Common myeloid progenitor, CD34-positive (primary cell): ENCODE measurements at regions of chr1 and their contacts with region 1.

Region 1: DNA sequence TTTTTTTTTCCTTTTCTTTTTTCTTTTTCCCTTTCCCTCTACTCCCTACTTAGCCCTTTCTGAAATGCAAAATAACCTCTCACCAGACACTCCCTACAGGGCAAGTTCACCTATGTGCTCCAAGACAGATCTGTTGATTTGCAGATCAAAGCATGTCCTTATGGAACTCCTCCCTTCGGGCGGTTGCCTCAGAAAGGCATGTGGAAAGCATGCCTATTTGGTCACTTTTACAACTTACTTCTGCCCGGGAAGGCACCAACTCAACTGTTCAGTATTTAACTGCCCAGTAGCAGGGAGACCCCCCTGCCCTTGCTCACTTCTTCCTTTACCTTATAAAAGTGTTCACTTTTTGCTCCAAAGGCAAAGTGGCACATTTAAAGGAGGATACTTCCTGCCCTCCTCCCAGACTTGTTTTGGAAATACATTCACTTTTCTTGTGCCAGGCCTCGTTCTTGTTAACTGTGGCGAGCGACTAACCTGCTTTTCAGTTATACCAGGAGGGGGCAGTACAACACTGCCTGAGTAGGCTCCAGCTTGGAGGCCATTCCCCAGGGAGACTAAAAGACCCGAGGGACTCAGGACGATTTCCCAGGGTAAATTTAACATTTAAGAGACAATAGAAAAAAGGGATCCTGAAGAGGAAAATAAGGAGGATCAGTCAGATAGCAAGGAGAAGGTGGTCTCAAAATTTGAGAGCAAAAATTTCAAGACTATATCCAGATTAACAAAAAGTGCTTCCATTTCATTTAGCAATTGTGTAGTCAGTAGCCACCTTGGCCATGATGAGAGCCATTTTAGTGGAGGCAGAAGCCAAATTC is 12.3 kb upstream of the SLAMF7 start:
- DNase-seq: peak; percentile 74 to 83 (median 81)
- H3K4me3 ChIP-seq: peak overlapping the region in 1 of 7 experiments; percentile 4
- H3K27ac ChIP-seq: no peak overlapping the region
- H3K4me1 ChIP-seq: peaks cover 7 to 41% (median 16%) of the 10 kb centered on the region in 4 experiments
- H3K27me3 ChIP-seq: no peaks in the 10 kb centered on the region

Region 2: DNA sequence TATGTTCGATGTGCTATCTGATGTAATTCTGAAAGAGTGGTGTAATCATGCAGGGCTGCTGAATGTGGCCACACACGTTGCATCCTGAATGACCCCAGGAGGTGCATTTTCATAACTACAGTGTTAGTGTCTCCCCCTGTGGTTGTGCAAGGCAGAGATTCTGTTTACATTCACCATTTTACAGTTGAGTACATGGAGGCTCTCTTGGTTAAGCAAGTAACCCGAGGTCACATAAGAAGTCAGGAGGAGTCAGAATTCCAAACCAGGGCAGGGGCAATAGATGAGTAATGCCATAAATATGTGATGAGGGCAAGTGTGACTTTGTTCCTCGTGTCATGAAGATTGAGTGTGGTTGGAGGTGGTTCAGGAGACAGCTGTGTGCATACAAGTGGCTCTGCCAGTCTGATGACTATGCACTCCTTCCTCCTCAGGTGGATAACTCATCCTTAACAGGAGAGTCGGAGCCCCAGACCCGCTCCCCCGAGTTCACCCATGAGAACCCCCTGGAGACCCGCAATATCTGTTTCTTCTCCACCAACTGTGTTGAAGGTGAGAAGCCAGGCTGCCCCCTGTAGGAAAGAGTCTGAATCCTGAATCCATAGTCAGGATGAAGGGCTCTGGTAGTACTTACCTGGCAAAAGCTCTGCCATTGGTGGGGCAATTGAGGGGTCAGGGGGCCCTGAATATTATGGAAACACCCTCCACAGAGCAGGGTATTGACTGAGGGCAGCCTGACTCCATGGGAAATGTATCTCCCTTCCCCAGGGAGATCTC is 601.8 kb before region 1 on chr1:
- CTCF ChIA-PET with region 1: no interaction called
- POLR2A ChIA-PET with region 1: no interaction called
- DNase-seq: no peak
- H3K4me3 ChIP-seq: no peak overlapping the region
- H3K27ac ChIP-seq: no peak overlapping the region
- H3K4me1 ChIP-seq: no peaks in the 10 kb centered on the region
- H3K27me3 ChIP-seq: no peaks in the 10 kb centered on the region

Region 3: DNA sequence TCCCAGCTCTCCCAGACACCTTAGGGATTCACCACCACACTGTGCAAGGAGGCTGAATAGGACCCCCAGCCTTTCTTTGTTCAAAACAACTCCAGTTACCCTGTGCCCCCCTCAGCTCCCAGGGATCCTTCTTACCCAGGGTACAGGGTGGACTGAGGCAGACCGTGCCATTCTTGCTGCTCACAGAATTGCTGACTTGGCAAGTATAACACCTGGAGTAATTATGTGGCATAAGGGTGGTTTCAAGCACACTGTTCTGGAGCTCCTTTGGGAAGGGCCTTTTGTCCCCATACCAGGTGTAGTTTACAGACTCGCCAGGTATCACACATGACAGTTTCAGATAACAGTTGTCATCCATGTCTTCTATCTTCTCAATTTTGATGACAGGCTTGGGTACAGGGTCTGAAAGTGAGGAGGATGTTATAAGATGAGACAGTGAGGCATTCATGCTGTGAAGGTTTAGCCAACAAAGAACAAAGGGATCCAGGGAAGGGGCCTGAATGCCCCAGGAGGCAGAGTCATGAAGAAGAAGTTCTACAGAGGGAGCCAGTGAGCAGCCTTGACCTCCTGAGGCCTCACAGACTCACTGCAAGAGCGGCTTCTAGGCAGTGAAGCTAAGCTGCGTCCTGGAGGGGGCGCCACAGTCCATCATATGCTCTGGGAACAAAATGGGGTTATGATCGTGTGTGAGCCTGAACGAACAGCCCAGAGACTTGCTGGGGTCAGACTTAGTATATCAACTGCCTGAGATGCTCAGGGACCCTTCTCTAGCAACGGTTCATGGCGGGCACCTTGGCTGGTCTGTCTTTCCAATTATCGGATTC is 45.4 kb before region 1 on chr1:
- CTCF ChIA-PET with region 1: interaction called, 34 read pairs
- POLR2A ChIA-PET with region 1: no interaction called
- DNase-seq: peak; percentile 88 to 94 (median 89)
- H3K4me3 ChIP-seq: no peak overlapping the region
- H3K27ac ChIP-seq: no peak overlapping the region
- H3K4me1 ChIP-seq: peaks cover 0 to 24% (median 13%) of the 10 kb centered on the region in 4 experiments
- H3K27me3 ChIP-seq: no peaks in the 10 kb centered on the region

Region 4: GRCh38 chr1:160704250-160704649 is 22.5 kb before region 1 on chr1:
- CTCF ChIA-PET with region 1: interaction called, 19 read pairs
- POLR2A ChIA-PET with region 1: no interaction called
- DNase-seq: peak; percentile 58 to 90 (median 81)
- H3K4me3 ChIP-seq: peak overlapping the region in 2 of 7 experiments; percentile 16 to 55
- H3K27ac ChIP-seq: no peak overlapping the region
- H3K4me1 ChIP-seq: peaks cover 43 to 73% (median 49%) of the 10 kb centered on the region in 4 experiments
- H3K27me3 ChIP-seq: no peaks in the 10 kb centered on the region

Region 5: DNA sequence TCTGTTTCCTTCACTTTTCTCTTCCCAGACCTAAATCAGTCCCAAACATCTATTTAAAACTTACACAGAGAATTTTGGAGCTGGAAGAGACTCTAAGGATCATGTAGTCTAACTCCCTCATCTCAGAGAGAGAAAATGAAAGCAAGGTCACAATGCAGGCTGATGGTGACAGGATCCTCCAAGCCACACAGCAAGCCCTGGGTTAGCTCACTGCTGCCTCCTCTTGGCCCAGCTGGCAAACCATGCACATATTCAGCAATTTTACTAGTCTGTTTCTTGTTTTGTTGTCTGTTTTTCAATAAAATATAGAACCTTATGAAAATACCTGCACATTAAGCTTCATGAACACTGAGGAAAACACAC is 41.6 kb after region 1 on chr1:
- CTCF ChIA-PET with region 1: interaction called, 12 read pairs
- POLR2A ChIA-PET with region 1: no interaction called
- DNase-seq: peak; percentile 73 to 88 (median 85)
- H3K4me3 ChIP-seq: peak overlapping the region in 1 of 7 experiments; percentile 27
- H3K27ac ChIP-seq: no peak overlapping the region
- H3K4me1 ChIP-seq: peaks cover 0 to 9% (median 3%) of the 10 kb centered on the region in 4 experiments
- H3K27me3 ChIP-seq: no peaks in the 10 kb centered on the region

Region 6: GRCh38 chr1:160830321-160831153 is 103.8 kb after region 1 on chr1:
- CTCF ChIA-PET with region 1: interaction called, 10 read pairs
- POLR2A ChIA-PET with region 1: interaction called, 3 read pairs
- DNase-seq: peak; percentile 57 to 74 (median 74)
- H3K4me3 ChIP-seq: no peak overlapping the region
- H3K27ac ChIP-seq: no peak overlapping the region
- H3K4me1 ChIP-seq: peaks cover 0 to 6% (median 2%) of the 10 kb centered on the region in 4 experiments
- H3K27me3 ChIP-seq: no peaks in the 10 kb centered on the region